PC-3 (cell line): ENCODE measurements at regions of chr2 and their contacts with region 1.

Region 1: GRCh38 chr2:5188636-5189035 is 503.5 kb upstream of the SOX11 start:
- DNase-seq: peak; percentile 79
- ATAC-seq: peak; percentile 82
- H3K4me3 ChIP-seq: 0 out of 2 replicates have a peak overlapping the region, but pooled peaks have one; percentile 15
- H3K27ac ChIP-seq: peak overlapping the region; percentile 76
- H3K4me1 ChIP-seq: peaks cover 30% of the 10 kb centered on the region
- H3K27me3 ChIP-seq: no peaks in the 10 kb centered on the region
- CTCF ChIP-seq: no peak

Region 2: GRCh38 chr2:5077439-5078089 is 111.1 kb before region 1 on chr2:
- CTCF ChIA-PET with region 1: no interaction called
- POLR2A ChIA-PET with region 1: no interaction called
- intact Hi-C with region 1: loop called (anchors 1 kb)
- DNase-seq: peak; percentile 71
- ATAC-seq: peak; percentile 87
- H3K4me3 ChIP-seq: no peak overlapping the region
- H3K27ac ChIP-seq: peak overlapping the region; percentile 11; the same call in 1 of the 2 replicates
- H3K4me1 ChIP-seq: peaks cover 11% of the 10 kb centered on the region
- H3K27me3 ChIP-seq: no peaks in the 10 kb centered on the region
- CTCF ChIP-seq: peak; percentile 57

Region 3: GRCh38 chr2:5093056-5093455 is 95.6 kb before region 1 on chr2:
- CTCF ChIA-PET with region 1: no interaction called
- POLR2A ChIA-PET with region 1: no interaction called
- intact Hi-C with region 1: no loop called
- DNase-seq: peak; percentile 50
- ATAC-seq: no peak
- H3K4me3 ChIP-seq: no peak overlapping the region
- H3K27ac ChIP-seq: no peak overlapping the region
- H3K4me1 ChIP-seq: no peaks in the 10 kb centered on the region
- H3K27me3 ChIP-seq: no peaks in the 10 kb centered on the region
- CTCF ChIP-seq: no peak

Region 4: GRCh38 chr2:5164776-5165525 is 23.7 kb before region 1 on chr2:
- CTCF ChIA-PET with region 1: no interaction called
- POLR2A ChIA-PET with region 1: no interaction called
- intact Hi-C with region 1: loop called (anchors 1 kb)
- DNase-seq: peak; percentile 88
- ATAC-seq: peak; percentile 98
- H3K4me3 ChIP-seq: peak overlapping the region; percentile 22; the same call in 1 of the 2 replicates
- H3K27ac ChIP-seq: peak overlapping the region; percentile 68
- H3K4me1 ChIP-seq: peaks cover 20% of the 10 kb centered on the region
- H3K27me3 ChIP-seq: no peaks in the 10 kb centered on the region
- CTCF ChIP-seq: no peak

Region 5: GRCh38 chr2:5269008-5269407 is 80.4 kb after region 1 on chr2:
- CTCF ChIA-PET with region 1: no interaction called
- POLR2A ChIA-PET with region 1: no interaction called
- intact Hi-C with region 1: loop called (anchors 2 kb)
- DNase-seq: no peak
- ATAC-seq: no peak
- H3K4me3 ChIP-seq: no peak overlapping the region
- H3K27ac ChIP-seq: no peak overlapping the region
- H3K4me1 ChIP-seq: no peaks in the 10 kb centered on the region
- H3K27me3 ChIP-seq: no peaks in the 10 kb centered on the region
- CTCF ChIP-seq: no peak

Region 6: DNA sequence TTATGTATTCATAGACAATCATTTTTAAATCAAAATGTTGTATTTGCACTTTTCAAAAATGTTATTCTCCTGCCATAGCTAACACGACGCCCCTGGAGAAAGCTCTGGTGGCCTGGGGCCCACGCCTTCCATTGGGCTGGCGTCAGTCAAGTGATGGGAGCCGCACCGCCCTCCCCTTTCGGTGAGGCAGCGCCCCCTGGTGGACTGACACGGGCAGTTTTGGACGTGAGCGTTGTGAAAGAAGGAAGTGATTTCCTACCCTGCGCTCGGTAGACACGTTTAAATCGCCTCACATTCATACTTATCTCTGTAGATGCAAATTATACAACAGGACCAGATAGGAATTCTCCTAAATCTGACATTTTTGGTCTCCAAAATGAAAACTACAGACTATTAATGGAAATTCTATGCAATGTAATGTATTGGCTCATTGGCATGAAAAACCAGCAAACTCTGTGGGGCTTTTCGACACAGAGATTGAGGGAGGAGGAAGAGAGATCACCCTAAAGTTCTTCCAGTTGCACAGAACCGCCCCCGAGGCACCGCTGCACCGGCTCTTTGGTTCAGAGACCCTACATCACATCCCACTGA is 177.3 kb after region 1 on chr2:
- CTCF ChIA-PET with region 1: no interaction called
- POLR2A ChIA-PET with region 1: no interaction called
- intact Hi-C with region 1: loop called (anchors 10 kb)
- DNase-seq: peak; percentile 78
- ATAC-seq: peak; percentile 95
- H3K4me3 ChIP-seq: 0 out of 2 replicates have a peak overlapping the region, but pooled peaks have one; percentile 30
- H3K27ac ChIP-seq: no peak overlapping the region
- H3K4me1 ChIP-seq: no peaks in the 10 kb centered on the region
- H3K27me3 ChIP-seq: no peaks in the 10 kb centered on the region
- CTCF ChIP-seq: peak; percentile 94

Region 7: DNA sequence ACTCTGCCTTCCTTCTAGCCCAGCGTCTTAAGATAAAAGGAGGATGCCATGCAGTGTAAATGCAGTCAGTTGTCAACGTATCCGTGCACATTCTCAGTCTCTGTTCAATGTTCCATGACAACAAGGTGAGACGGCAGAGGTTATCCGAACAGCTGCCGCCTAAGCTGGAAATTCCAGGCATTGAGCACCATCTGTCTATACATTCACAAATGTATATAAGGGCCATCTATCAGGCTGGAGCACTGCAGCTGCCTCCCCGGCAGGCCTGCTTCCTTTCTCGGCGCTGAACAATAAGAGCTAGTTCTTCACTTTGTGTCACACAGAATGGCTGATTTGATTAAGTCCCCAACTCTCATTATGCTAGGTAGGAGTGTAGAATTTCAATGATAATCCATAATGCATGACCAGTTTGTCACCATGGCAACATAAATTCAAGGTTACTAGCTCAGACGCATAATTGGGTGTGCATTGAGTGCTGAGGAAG is 221.3 kb after region 1 on chr2:
- CTCF ChIA-PET with region 1: no interaction called
- POLR2A ChIA-PET with region 1: no interaction called
- intact Hi-C with region 1: no loop called
- DNase-seq: no peak
- ATAC-seq: no peak
- H3K4me3 ChIP-seq: no peak overlapping the region
- H3K27ac ChIP-seq: no peak overlapping the region
- H3K4me1 ChIP-seq: no peaks in the 10 kb centered on the region
- H3K27me3 ChIP-seq: no peaks in the 10 kb centered on the region
- CTCF ChIP-seq: no peak

Region 8: DNA sequence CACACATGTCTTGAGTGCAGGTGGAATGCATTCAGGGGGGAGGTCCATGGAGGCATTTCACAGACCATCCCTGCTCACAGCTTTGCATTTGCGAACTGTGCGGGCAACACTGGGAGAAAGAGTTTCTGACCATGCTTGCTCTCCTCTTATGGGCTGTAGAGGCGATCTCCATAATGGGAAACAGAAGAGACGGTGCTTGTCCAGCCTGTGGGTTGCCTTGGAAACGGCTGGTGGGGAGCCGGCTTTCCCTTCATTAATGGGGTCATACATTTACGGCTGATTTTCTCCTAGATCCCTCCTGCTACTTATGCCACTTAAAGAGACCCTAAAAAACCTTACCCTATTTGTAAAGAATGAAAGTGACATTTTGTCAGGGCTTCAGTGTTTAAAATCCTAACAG is 650.9 kb after region 1 on chr2:
- CTCF ChIA-PET with region 1: no interaction called
- POLR2A ChIA-PET with region 1: no interaction called
- intact Hi-C with region 1: no loop called
- DNase-seq: no peak
- ATAC-seq: no peak
- H3K4me3 ChIP-seq: no peak overlapping the region
- H3K27ac ChIP-seq: no peak overlapping the region
- H3K4me1 ChIP-seq: no peaks in the 10 kb centered on the region
- H3K27me3 ChIP-seq: no peaks in the 10 kb centered on the region
- CTCF ChIP-seq: no peak